ENCODE measurements at regions of chrX and their contacts with region 1.

Region 1: GRCh38 chrX:41178201-41178600 is 93.0 kb downstream of the USP9X start:
- DNase-seq: no peak

Region 2: GRCh38 chrX:41245641-41246040 is 67.4 kb after region 1 on chrX:
- intact Hi-C with region 1: loop called (anchors 10 kb)
- DNase-seq: no peak

Measured in head of caudate nucleus (tissue), 42 donors.